ENCODE measurements at regions of chr11 and their contacts with region 1.

Region 1: GRCh38 chr11:71420455-71421241 is 27.5 kb downstream of the DHCR7 start:
- DNase-seq: peak; percentile 81
- H3K4me3 ChIP-seq: no peak overlapping the region
- H3K27ac ChIP-seq: no peak overlapping the region
- H3K4me1 ChIP-seq: peaks cover 64% of the 10 kb centered on the region
- CTCF ChIP-seq: peak; percentile 96

Region 2: DNA sequence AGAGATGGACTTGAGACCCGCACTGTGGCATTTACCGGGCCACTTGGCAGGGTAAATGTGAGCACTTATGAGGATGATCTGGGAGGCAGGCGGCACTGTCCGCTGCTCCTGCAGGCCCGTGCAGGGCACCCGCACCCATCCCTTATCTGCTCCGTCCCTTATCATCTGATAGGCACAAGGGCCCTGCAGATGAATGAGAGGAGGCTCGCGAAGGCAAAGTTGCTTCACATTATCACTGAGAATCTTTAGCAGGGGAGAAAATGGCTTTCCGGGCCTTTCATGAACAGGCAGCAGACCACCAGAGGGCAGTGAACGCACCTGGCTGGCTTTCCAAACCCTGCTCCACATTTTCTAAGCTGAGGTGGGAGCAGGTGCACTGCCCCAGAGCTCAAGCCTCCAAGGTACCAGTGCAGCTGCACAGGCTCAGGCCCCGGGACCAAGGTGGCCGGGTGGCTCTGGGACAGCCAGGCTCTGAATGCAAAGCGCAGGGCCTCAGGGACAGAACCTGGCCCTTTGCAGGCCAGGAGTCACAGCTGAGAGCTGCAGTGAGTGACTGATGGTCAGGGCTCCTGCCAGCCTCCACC is 333.9 kb before region 1 on chr11:
- CTCF ChIA-PET with region 1: no interaction called
- POLR2A ChIA-PET with region 1: no interaction called
- intact Hi-C with region 1: loop called (anchors 1 kb)
- DNase-seq: peak; percentile 56
- H3K4me3 ChIP-seq: no peak overlapping the region
- H3K27ac ChIP-seq: no peak overlapping the region
- H3K4me1 ChIP-seq: no peaks in the 10 kb centered on the region
- CTCF ChIP-seq: peak; percentile 75

Region 3: GRCh38 chr11:71204294-71204693 is 216.4 kb before region 1 on chr11:
- CTCF ChIA-PET with region 1: no interaction called
- POLR2A ChIA-PET with region 1: no interaction called
- intact Hi-C with region 1: loop called (anchors 5 kb)
- DNase-seq: peak; percentile 49
- H3K4me3 ChIP-seq: no peak overlapping the region
- H3K27ac ChIP-seq: no peak overlapping the region
- H3K4me1 ChIP-seq: peaks cover 40% of the 10 kb centered on the region
- CTCF ChIP-seq: no peak

Region 4: GRCh38 chr11:71325418-71326327 is 95.0 kb before region 1 on chr11:
- CTCF ChIA-PET with region 1: no interaction called
- POLR2A ChIA-PET with region 1: no interaction called
- intact Hi-C with region 1: no loop called
- DNase-seq: no peak
- H3K4me3 ChIP-seq: no peak overlapping the region
- H3K27ac ChIP-seq: no peak overlapping the region
- H3K4me1 ChIP-seq: no peaks in the 10 kb centered on the region
- CTCF ChIP-seq: no peak

Region 5: DNA sequence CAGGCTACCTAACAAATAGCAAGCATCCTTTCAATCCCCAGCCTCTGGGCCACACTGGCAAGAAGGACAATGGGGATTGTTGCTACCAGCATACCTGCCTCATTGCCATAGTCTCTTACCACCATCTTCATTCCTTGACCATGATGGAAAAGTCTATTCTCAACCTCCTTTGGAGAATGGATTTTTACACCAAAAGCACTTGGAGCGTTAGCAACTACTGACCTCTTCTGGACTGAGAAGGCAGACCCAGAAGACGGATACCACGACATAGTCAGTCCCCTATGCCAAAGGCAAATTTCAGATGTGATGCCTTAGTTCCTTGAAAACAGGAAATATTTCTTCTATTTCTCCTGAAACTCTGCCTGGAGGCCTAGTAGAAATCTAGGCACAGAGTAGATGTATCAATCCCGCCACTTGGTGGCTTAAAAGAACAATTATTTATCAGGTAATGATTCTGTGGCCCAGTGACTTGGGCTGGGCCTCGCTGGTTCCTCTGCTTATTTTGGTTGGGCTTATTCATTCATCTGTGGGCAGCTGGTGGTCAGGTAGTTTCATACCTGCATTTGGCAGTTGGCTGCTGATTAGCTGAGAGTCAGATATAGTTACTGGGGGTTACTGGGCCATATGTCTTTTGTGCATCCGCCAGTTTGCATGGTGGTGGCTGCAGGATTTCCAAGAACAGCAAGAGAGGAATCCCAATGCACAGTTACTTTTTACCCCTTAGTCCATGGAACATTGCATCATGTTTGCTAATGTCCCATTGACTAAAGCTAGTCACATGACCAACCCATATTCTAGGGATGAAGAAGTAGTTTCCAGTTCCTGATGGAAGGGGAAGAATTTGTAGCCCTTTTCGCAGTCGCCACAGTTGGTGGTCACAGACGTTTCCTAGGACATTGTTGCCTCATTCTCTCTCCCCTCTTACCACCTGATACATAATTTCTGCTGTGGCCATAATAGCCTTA is 47.7 kb before region 1 on chr11:
- CTCF ChIA-PET with region 1: interaction called, 43 read pairs
- POLR2A ChIA-PET with region 1: interaction called, 36 read pairs
- intact Hi-C with region 1: loop called (anchors 1 kb)
- DNase-seq: peak; percentile 77
- H3K4me3 ChIP-seq: peak overlapping the region; percentile 58
- H3K27ac ChIP-seq: peak overlapping the region; percentile 98
- H3K4me1 ChIP-seq: peaks cover 59% of the 10 kb centered on the region
- CTCF ChIP-seq: peak; percentile 77

Region 6: GRCh38 chr11:71396548-71397123 is 24.0 kb before region 1 on chr11:
- CTCF ChIA-PET with region 1: interaction called, 4 read pairs
- POLR2A ChIA-PET with region 1: interaction called, 7 read pairs
- intact Hi-C with region 1: loop called (anchors 1 kb)
- DNase-seq: no peak
- H3K4me3 ChIP-seq: no peak overlapping the region
- H3K27ac ChIP-seq: no peak overlapping the region
- H3K4me1 ChIP-seq: peaks cover under 1% of the 10 kb centered on the region
- CTCF ChIP-seq: no peak

Measured in OCI-LY7 (cell line).